ENCODE measurements at regions of chr12 and their contacts with region 1.

Region 1: DNA sequence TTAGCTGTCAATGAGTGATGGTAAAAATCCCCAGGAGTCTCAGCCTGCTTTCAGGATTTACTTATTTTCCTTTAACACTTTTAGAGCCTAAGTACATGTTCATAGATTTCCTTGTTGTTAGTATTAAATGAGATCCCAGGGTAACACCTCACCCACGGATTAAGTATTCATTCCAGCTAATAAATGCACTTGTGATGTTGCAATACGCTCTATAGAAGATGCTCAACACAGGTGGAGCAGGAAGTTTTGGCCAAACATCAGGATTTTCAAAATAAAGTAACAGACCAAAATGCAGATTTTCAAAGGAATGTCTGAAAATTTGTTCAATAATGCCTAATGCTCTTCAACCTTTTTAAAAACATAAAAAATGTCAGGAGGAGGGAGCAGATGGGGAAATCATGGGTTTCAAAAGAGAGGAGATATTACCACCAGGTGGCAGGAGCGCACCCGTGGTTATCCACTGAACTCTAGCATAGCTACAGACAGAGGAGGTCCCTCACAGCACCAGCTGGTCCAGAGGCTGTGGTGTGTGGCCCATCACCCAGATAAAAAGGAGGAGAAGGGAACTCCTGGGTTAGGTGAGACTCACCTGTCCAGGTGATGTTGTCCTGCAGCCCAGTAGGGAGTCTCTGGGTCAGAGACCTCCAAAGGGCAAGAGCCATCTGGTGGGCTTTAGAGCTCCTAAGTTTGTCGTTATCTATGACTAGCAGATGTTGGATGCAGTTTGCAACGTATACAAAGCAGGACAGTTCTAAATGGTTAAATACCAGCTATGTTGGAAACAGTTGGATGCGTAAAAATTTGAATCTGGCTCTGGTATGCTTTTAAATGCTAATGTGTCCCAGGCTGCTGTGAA is 1158.4 kb upstream of the TMEM132C start:
- DNase-seq: peak; percentile 8
- H3K4me3 ChIP-seq: no peak overlapping the region
- H3K27me3 ChIP-seq: no peaks in the 10 kb centered on the region
- CTCF ChIP-seq: peak; percentile 77

Region 2: DNA sequence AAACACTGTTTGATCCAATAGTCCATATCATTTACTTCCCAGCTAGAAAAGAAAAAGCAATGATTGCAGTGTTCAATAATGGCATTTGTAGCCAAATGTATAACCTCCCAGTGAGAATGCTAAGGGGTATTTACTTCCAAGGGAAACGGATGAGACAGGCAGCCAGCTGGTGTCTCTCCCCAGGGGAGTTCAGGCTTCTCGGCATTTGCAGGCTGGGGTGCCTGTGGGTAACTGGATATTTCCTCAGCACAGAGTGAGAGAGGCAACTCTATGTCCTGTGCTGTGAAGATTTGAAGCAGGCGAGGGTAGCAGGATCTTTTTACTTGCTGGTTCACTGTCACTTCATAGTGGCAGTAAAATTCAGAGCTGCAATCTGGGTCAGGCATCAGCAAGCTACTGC is 297.2 kb before region 1 on chr12:
- CTCF ChIA-PET with region 1: no interaction called
- POLR2A ChIA-PET with region 1: no interaction called
- DNase-seq: no peak
- H3K4me3 ChIP-seq: no peak overlapping the region
- H3K27me3 ChIP-seq: no peaks in the 10 kb centered on the region
- CTCF ChIP-seq: no peak

Region 3: DNA sequence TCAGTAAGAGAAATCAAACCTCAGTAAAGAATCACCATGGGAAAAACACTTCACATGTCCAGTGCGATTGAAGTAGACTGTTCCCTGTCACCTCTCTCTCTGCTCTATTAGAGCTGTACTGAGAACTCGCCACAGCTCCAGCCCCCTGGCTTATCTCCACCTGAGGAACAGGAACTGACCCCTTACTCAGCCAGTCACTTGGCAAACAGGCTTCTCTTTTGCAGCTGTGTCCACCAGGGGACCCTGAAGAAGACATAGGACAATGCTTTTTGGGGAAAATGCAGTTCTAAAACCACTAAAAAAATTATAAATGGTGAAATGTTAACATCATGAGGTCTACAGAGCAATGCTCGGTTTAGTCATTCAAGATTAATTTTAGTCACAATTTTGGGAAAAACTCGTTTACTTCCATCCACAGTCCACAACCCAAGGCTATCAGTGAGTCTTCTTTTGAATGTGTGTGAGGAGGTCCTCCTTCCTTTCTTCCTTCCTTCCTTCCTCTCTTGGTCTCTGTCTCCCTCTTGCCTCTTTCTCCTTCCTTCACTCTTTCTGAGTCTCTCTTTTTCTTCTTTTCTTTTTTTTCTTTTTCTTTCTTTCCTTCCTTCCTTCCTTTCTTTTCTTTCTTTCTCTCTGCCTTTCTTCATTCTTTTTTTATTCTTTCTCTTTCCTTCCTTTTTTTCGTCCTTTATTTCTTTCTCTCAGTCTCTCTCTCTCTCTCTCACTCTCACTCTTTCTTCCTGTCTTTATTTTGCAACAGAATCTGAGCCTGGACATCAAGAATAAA is 31.1 kb before region 1 on chr12:
- CTCF ChIA-PET with region 1: no interaction called
- POLR2A ChIA-PET with region 1: no interaction called
- DNase-seq: no peak
- H3K4me3 ChIP-seq: no peak overlapping the region
- H3K27me3 ChIP-seq: peaks cover 1% of the 10 kb centered on the region; the same call in 1 of the 2 replicates
- CTCF ChIP-seq: no peak

Region 4: GRCh38 chr12:127121494-127122084 is 13.0 kb after region 1 on chr12:
- CTCF ChIA-PET with region 1: interaction called, 10 read pairs
- POLR2A ChIA-PET with region 1: no interaction called
- DNase-seq: no peak
- H3K4me3 ChIP-seq: no peak overlapping the region
- H3K27me3 ChIP-seq: no peaks in the 10 kb centered on the region
- CTCF ChIP-seq: no peak

Region 5: DNA sequence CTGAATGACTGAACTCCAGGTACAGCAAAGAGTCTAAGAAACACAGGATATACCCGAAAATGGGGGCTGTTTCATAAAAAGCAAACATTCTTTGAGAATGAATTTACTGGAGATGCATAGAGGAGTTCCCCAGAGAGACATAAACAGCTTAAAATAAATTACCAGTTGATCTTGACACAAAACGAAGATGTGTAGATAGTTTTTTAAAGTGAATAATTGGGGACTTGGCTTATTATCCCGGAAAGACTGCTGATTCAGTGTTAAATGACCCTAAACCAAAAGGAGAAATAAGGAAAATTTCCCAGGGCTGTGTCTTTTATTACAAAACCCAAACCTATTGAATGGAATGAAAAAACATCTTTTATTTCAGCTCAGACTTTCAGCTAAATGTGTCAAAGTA is 105.6 kb after region 1 on chr12:
- CTCF ChIA-PET with region 1: no interaction called
- POLR2A ChIA-PET with region 1: no interaction called
- DNase-seq: no peak
- H3K4me3 ChIP-seq: no peak overlapping the region
- H3K27me3 ChIP-seq: no peaks in the 10 kb centered on the region
- CTCF ChIP-seq: no peak

Region 6: DNA sequence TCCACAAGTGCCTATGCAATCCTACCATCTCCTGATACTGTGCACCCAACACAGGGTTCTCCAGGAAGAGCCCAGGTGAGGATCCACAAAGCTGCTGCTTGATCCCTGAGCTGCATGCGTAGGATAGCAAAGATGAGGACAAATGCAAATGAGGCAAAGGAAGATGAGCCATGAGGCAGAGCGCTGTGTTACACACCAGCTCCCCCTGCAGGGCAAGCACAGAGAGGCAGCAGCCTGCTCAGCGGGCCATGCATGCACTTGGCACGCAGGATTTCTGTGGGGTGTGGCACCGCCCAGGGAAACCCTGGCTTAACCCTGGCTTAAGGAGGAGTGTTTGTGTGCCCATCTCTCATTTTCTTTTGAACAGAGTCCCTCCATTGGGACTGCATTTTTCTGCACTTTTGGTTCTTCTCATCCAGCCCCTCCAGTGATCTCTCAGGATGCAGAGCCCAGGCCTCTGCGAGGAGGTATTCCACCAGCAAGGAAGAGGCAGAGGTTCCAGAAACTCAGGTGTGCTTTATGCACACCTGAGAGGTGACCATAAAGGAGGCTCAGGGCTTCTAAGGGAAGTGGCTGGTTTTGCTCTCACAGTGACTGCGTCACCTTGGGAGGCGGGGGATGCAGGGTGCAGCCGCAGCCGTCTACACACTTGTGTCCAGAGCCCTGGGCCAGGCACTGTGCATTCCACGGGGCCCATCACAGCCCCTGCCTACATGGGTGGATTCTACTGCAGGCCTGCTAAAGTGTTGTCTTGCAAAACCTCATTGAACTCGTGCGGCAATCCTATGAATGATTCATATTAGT is 185.1 kb after region 1 on chr12:
- CTCF ChIA-PET with region 1: interaction called, 135 read pairs
- POLR2A ChIA-PET with region 1: no interaction called
- DNase-seq: no peak
- H3K4me3 ChIP-seq: no peak overlapping the region
- H3K27me3 ChIP-seq: no peaks in the 10 kb centered on the region
- CTCF ChIP-seq: peak; percentile 96

Region 7: GRCh38 chr12:127355061-127355841 is 246.7 kb after region 1 on chr12:
- CTCF ChIA-PET with region 1: interaction called, 47 read pairs
- POLR2A ChIA-PET with region 1: no interaction called
- DNase-seq: no peak
- H3K4me3 ChIP-seq: no peak overlapping the region
- H3K27me3 ChIP-seq: no peaks in the 10 kb centered on the region
- CTCF ChIP-seq: peak; percentile 60

Region 8: DNA sequence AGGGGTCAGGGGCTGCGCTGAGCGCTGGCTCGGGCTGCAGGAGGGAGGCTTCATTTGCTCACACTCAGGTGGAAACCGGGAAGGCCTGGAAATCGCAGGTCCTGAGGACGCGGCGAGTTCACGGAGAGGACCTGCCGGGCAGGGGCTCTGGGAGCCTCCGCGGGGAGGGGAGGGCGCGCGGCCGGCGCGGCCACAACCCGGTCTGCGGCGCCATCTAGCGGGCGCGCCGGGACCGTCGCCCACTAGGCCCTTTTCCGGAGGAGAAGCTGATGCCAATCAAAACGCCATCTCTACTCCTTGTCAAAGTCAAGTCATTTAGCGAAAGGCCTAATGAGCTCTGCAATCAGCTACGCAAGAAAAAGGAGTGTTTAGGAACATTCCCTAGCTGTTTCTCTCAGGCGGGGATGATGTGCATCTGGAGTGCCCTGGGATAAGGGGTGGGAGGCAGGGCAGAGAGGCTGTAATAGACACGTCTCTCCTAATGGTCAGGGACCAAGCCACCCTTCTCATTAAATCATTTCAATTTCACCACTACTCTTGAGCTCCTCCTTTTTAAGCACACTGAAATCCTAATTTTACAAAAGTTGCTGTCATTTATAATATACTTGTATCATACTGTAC is 272.6 kb after region 1 on chr12:
- CTCF ChIA-PET with region 1: interaction called, 31 read pairs
- POLR2A ChIA-PET with region 1: no interaction called
- DNase-seq: no peak
- H3K4me3 ChIP-seq: peak overlapping the region; percentile 31
- H3K27me3 ChIP-seq: no peaks in the 10 kb centered on the region
- CTCF ChIP-seq: peak; percentile 75